ENCODE measurements at regions of chrX and their contacts with region 1.

Region 1: DNA sequence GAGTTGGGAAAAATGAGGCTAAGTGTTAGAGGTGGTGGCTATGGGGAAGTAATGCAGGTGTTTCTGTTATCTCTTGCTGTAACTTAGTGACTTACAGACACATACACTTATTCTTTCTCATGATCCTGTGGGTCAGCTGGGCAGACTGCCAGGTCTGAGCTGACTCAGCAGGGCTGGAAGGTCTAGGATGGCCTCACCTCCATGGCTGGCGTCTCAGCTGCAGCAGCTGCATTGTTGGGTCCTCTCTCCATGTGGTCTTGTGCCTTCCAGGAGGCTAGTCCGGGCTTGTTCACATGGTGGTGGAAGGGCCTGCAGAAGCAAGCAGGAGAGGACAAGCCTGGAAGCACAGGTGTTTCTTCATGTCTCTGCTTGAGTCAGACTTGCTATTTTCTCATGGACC is 172.7 kb downstream of the NHS start:
- ATAC-seq: peak in 7 of 8 experiments; percentile 10 to 93 (median 60)
- H3K4me3 ChIP-seq: no peak overlapping the region
- H3K27ac ChIP-seq: peak overlapping the region; percentile 11 to 64
- H3K4me1 ChIP-seq: peaks cover 29 to 31% of the 10 kb centered on the region in 2 donors

Region 2: DNA sequence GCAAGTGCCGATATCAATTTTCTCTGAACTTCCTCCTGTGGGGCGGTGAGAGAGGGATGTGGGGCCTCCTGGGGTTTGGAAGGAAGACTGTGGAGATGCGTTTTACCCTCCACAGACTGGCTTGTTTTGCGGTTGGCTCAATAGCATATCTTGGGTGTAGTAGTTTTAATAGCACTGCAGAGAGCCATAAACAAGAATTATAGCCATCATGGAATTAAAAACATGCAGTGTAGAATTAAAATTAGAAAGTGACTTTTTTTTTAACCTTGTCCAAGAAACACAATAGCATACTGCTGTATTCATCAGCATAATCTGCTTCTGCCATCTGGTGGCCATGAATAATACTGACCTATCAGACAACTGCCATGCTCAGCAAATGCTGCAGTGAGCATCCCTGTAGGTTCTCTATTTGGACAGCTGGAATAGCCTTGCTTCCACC is 142.3 kb after region 1 on chrX:
- in situ Hi-C with region 1: loop called in 1 of 9 experiments (anchors 25 kb)
- ATAC-seq: peak; percentile 83 to 98 (median 97)
- H3K4me3 ChIP-seq: no peak overlapping the region
- H3K27ac ChIP-seq: no peak overlapping the region
- H3K4me1 ChIP-seq: peaks cover 15 to 19% of the 10 kb centered on the region in 2 donors

Measured in motor neuron (in vitro differentiated cells).